PC-9 (cell line): ENCODE measurements at regions of chr6 and their contacts with region 1.

Region 1: GRCh38 chr6:44074439-44075136 is 52.7 kb downstream of the MRPL14 start:
- DNase-seq: peak; percentile 67 to 87
- H3K4me3 ChIP-seq: peak overlapping the region; percentile 66
- H3K27ac ChIP-seq: peak overlapping the region; percentile 94
- H3K4me1 ChIP-seq: peaks cover 80% of the 10 kb centered on the region
- H3K27me3 ChIP-seq: no peaks in the 10 kb centered on the region
- CTCF ChIP-seq: peak; percentile 94

Region 2: GRCh38 chr6:43723737-43724295 is 350.8 kb before region 1 on chr6:
- CTCF ChIA-PET with region 1: interaction called, 6 read pairs
- POLR2A ChIA-PET with region 1: interaction called, 5 read pairs
- intact Hi-C with region 1: loop called (anchors 1 kb)
- DNase-seq: peak; percentile 69 to 74
- H3K4me3 ChIP-seq: no peak overlapping the region
- H3K27ac ChIP-seq: no peak overlapping the region
- H3K4me1 ChIP-seq: peaks cover 28% of the 10 kb centered on the region
- H3K27me3 ChIP-seq: no peaks in the 10 kb centered on the region
- CTCF ChIP-seq: peak; percentile 83

Region 3: DNA sequence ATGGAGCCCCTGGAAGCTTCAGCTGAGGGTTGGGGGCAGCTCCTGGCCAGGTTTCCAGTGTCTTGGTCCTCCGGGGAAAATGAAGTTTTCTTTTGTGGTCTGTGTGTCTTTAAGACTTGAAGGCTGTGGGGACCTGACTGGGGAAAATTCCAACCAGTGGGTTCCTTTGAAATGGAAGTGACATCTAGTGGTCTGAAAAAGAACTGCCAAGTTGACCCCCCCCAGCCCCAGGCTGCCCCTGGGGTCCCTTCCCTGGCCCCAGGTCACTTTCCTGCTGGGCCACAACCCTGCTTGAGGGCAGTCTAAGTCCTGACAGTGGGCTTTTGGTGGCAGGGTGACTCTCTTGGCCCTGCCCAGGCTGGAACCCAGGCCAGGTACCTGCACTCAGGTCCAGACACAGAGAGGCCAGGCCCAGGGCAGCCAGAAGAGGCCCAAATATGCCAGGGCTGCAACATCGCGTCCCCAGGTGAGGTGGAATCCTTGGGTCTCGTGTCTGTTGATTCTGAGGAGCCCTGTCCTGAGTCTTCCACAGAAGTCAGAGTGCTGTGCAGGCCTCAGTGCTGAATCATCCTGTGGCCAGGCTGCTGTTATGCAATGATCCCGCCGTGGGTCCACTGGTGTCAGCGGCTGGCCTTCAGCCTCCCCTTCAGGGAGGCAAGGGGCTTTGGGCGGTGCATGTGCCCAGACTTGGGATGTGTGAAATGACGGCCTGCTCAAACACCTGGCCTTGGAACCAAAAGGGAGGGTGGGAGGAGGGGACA is 236.1 kb before region 1 on chr6:
- CTCF ChIA-PET with region 1: interaction called, 3 read pairs
- POLR2A ChIA-PET with region 1: no interaction called
- intact Hi-C with region 1: loop called (anchors 1 kb)
- DNase-seq: peak; percentile 39 to 57
- H3K4me3 ChIP-seq: no peak overlapping the region; the same call in 1 of the 2 replicates
- H3K27ac ChIP-seq: peak overlapping the region; percentile 73
- H3K4me1 ChIP-seq: peaks cover 36% of the 10 kb centered on the region
- H3K27me3 ChIP-seq: no peaks in the 10 kb centered on the region
- CTCF ChIP-seq: peak; percentile 85

Region 4: GRCh38 chr6:44002593-44003344 is 71.8 kb before region 1 on chr6:
- CTCF ChIA-PET with region 1: no interaction called
- POLR2A ChIA-PET with region 1: no interaction called
- intact Hi-C with region 1: loop called (anchors 1 kb)
- DNase-seq: no peak
- H3K4me3 ChIP-seq: peak overlapping the region; percentile 68; the same call in 1 of the 2 replicates
- H3K27ac ChIP-seq: peak overlapping the region; percentile 93
- H3K4me1 ChIP-seq: peaks cover 65% of the 10 kb centered on the region
- H3K27me3 ChIP-seq: no peaks in the 10 kb centered on the region
- CTCF ChIP-seq: no peak

Region 5: GRCh38 chr6:44041461-44042260 is 32.9 kb before region 1 on chr6:
- CTCF ChIA-PET with region 1: interaction called, 13 read pairs
- POLR2A ChIA-PET with region 1: interaction called, 4 read pairs
- intact Hi-C with region 1: loop called (anchors 1 kb)
- DNase-seq: peak; percentile 86 to 94
- H3K4me3 ChIP-seq: peak overlapping the region; percentile 49; the same call in 1 of the 2 replicates
- H3K27ac ChIP-seq: peak overlapping the region; percentile 99
- H3K4me1 ChIP-seq: peaks cover 82% of the 10 kb centered on the region
- H3K27me3 ChIP-seq: no peaks in the 10 kb centered on the region
- CTCF ChIP-seq: no peak; the same call in 1 of the 2 replicates

Region 6: DNA sequence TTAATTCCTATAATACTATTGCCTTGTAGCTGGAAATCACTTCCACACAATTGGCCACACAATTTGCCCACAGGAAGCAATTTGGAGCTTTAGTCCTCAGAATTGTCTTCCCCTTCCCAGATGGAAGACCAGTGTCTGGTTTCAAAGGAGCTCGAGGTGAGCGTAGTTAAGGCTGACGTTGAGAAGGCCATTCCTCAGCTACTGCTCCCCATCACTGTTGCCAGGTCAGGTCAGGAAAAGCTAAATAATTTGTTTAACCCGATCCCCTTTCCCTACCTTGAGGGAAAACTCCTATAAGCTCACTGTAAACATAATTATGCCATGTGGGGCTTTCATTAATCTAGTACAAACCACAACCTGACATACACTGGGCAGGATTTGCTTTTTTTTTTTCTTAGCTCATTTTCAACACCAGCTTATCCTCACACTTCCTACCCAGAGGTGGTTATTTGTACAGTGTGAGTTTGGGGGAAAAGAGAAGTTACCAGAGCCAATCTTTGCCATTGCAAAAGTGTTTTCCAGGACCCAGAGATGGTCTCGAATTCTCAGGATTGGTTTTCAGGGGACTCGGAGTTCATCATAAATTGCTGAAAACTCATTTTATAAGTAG is 1698.4 kb after region 1 on chr6:
- CTCF ChIA-PET with region 1: no interaction called
- POLR2A ChIA-PET with region 1: no interaction called
- intact Hi-C with region 1: no loop called
- DNase-seq: no peak
- H3K4me3 ChIP-seq: no peak overlapping the region
- H3K27ac ChIP-seq: no peak overlapping the region
- H3K4me1 ChIP-seq: no peaks in the 10 kb centered on the region
- H3K27me3 ChIP-seq: no peaks in the 10 kb centered on the region
- CTCF ChIP-seq: no peak